ENCODE measurements at regions of chr5 and their contacts with region 1.

Region 1: DNA sequence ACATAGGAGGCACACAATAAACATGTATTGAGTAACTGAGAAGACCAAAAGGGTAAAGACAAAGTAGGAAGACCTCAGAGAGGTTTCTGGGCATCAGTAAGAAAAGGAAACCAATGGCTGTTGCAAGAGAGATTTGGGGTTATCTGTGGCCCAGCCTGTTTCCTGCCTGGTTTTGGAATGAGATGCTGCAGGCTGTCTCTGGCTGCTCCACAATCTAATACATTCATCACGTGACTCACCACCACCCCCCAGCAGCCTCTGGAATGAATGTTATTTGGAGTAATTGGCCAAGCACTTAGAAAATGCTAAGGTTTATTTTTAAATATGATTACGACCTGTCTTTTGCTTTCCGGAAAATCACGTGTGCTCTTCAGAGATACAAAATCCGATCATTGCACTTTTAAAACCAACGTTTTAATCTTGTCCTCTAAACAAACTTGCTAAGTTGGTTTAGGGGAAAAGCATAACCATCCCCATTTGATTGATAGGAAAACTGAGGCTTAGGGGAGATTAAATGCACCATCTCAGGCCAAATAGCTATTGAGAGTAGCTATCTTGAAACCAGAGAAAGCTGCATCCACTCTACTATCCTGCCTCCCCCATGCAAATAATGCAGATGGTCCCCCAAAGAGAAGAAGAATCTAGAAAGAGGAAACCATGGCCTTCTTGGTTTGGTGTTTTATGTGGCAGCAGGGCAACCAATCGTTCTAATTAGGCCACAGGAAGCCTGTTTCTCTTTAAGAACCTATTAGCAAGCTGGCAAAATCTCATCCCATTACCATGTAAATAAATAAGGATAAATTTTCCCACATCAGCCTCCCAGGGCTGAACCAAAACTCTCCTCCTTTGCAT is 151.8 kb upstream of the ADRA1B start:
- DNase-seq: peak in 1 of 2 donors; percentile 88
- H3K4me3 ChIP-seq: no peak overlapping the region
- H3K27ac ChIP-seq: peak overlapping the region; percentile 48 to 60
- H3K4me1 ChIP-seq: peaks cover 3 to 16% of the 10 kb centered on the region in 2 donors
- H3K27me3 ChIP-seq: no peaks in the 10 kb centered on the region
- CTCF ChIP-seq: no peak

Region 2: GRCh38 chr5:159304961-159305595 is 459.4 kb before region 1 on chr5:
- intact Hi-C with region 1: no loop called
- DNase-seq: no peak
- H3K4me3 ChIP-seq: no peak overlapping the region
- H3K27ac ChIP-seq: no peak overlapping the region
- H3K4me1 ChIP-seq: no peaks in the 10 kb centered on the region
- H3K27me3 ChIP-seq: no peaks in the 10 kb centered on the region
- CTCF ChIP-seq: no peak

Region 3: GRCh38 chr5:159539678-159540077 is 224.8 kb before region 1 on chr5:
- intact Hi-C with region 1: loop called (anchors 5 kb)
- DNase-seq: no peak
- H3K4me3 ChIP-seq: no peak overlapping the region
- H3K27ac ChIP-seq: no peak overlapping the region
- H3K4me1 ChIP-seq: peaks cover 2 to 7% of the 10 kb centered on the region in 2 donors
- H3K27me3 ChIP-seq: no peaks in the 10 kb centered on the region
- CTCF ChIP-seq: no peak